ENCODE measurements at regions of chr6 and their contacts with region 1.

Region 1: DNA sequence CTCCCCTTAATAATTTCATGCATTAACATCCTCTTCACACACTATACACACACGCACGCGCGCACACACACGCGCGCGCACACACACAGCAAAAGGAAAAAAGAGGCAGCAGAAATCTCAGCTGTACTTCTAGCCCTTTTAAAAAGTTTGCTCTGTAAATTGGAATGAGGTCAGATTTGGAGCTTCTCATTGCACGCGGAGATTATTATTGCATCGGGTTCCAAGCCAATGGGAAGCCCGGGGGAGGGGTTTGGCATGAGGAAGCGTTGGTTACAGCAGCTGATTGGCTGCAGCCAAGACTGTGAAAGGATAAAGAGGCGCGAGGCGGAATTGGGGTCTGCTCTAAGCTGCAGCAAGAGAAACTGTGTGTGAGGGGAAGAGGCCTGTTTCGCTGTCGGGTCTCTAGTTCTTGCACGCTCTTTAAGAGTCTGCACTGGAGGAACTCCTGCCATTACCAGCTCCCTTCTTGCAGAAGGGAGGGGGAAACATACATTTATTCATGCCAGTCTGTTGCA is at the start of gene SOX4:
- DNase-seq: peak; percentile 95 to 97
- H3K4me3 ChIP-seq: peak within 1 kb of the TSS; percentile 99
- H3K4me3 Mint-ChIP-seq: peak within 1 kb of the TSS; percentile 20
- H3K27ac Mint-ChIP-seq: no peak within 1 kb of the TSS
- H3K4me1 ChIP-seq: peaks cover 9% of the 10 kb centered on the region
- H3K4me1 Mint-ChIP-seq: peaks cover 6% of the 10 kb centered on the region
- H3K27me3 ChIP-seq: no peaks in the 10 kb centered on the region
- H3K27me3 Mint-ChIP-seq: no peaks in the 10 kb centered on the region
- CTCF ChIP-seq: no peak
- total RNA-seq, gene SOX4: 76.8 and 77.3 TPM in 2 replicates

Region 2: GRCh38 chr6:20877008-20877937 is 716.2 kb before region 1 on chr6:
- CTCF ChIA-PET with region 1: interaction called, 7 read pairs
- POLR2A ChIA-PET with region 1: interaction called, 5 read pairs
- intact Hi-C with region 1: loop called (anchors 1 kb)
- DNase-seq: peak; percentile 82 to 89
- H3K4me3 ChIP-seq: no peak overlapping the region
- H3K4me3 Mint-ChIP-seq: peak overlapping the region; percentile 51
- H3K27ac Mint-ChIP-seq: peak overlapping the region; percentile 92
- H3K4me1 ChIP-seq: peaks cover 41% of the 10 kb centered on the region
- H3K4me1 Mint-ChIP-seq: peaks cover 33% of the 10 kb centered on the region
- H3K27me3 ChIP-seq: no peaks in the 10 kb centered on the region
- H3K27me3 Mint-ChIP-seq: no peaks in the 10 kb centered on the region
- CTCF ChIP-seq: no peak

Region 3: DNA sequence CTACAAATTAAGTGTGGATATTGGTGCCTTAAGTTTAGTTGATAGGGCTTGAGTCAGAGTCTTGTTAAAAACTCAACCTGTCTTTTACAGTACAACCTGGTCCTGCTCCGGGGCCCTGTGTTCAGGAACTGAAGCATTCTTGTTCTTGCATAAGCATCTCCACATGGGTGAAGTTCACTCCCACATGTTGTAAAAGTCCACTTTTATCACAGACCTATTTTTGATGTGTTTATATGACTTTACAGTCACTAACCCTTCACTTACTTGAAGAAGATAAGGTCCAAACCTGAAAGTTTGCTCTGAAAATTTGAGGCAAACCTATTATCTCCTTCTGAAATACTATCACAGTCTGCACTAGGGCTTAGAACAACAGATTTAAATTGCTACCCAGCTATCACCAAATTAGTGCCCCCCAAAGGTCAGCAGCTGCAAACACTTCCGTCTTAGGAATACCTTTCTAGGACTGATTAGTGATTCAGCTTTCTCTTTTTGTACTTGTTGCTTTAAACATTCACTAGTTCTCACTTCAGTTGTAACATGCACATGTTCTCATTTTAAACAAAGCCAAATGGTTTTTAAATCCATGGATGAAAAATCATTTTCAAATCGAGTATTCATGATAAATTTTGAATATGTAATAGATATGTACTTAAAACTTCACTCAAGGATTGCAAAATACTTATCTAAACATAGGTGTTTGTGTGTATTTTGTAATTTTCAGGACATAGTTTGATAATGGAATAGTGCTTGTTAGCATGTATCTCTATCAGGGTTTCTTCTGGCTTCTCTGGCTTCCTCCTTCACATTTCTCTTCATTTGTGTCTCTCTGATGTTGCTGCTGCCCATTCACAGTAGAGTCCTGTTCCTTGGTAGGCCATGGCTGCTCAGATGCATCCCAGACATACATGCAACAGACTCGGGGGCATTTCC is 469.7 kb before region 1 on chr6:
- CTCF ChIA-PET with region 1: no interaction called
- POLR2A ChIA-PET with region 1: no interaction called
- intact Hi-C with region 1: loop called (anchors 10 kb)
- DNase-seq: peak; percentile 27 to 44
- H3K4me3 ChIP-seq: no peak overlapping the region
- H3K4me3 Mint-ChIP-seq: no peak overlapping the region
- H3K27ac Mint-ChIP-seq: peak overlapping the region; percentile 65
- H3K4me1 ChIP-seq: peaks cover 15% of the 10 kb centered on the region
- H3K4me1 Mint-ChIP-seq: peaks cover 13% of the 10 kb centered on the region
- H3K27me3 ChIP-seq: no peaks in the 10 kb centered on the region
- H3K27me3 Mint-ChIP-seq: no peaks in the 10 kb centered on the region
- CTCF ChIP-seq: no peak

Region 4: DNA sequence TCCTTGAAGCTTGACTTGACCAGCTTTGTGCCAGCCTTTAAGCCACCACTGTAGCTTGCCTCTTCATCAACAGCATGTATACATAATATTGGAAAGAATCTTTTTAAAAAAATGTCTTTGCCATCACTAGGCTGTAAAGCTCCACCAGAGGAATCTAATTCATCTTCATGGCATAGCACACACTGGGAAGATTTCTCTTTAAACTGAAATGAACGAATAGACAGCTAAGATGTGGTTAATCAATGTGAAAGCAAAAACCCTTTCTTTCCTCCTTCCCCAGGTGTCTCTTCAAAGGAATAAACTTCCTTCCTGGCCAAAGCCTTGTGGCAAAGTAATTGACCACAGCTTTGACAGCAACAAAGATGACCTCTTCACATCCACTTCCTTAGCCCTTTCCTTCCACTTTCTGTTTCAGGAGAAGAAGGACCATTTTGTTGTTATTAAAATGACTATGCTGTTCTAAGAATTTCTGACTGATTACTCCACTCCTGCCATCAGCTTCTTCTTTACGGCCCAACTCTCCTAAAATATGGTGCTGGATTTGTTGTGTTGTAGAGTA is 428.6 kb before region 1 on chr6:
- CTCF ChIA-PET with region 1: no interaction called
- POLR2A ChIA-PET with region 1: no interaction called
- intact Hi-C with region 1: no loop called
- DNase-seq: no peak
- H3K4me3 ChIP-seq: no peak overlapping the region
- H3K4me3 Mint-ChIP-seq: no peak overlapping the region
- H3K27ac Mint-ChIP-seq: no peak overlapping the region
- H3K4me1 ChIP-seq: no peaks in the 10 kb centered on the region
- H3K4me1 Mint-ChIP-seq: peaks cover 6% of the 10 kb centered on the region
- H3K27me3 ChIP-seq: no peaks in the 10 kb centered on the region
- H3K27me3 Mint-ChIP-seq: no peaks in the 10 kb centered on the region
- CTCF ChIP-seq: no peak

Region 5: GRCh38 chr6:21451546-21452013 is 141.9 kb before region 1 on chr6:
- CTCF ChIA-PET with region 1: no interaction called
- POLR2A ChIA-PET with region 1: no interaction called
- intact Hi-C with region 1: no loop called
- DNase-seq: no peak
- H3K4me3 ChIP-seq: no peak overlapping the region
- H3K4me3 Mint-ChIP-seq: no peak overlapping the region
- H3K27ac Mint-ChIP-seq: no peak overlapping the region
- H3K4me1 ChIP-seq: peaks cover 17% of the 10 kb centered on the region
- H3K4me1 Mint-ChIP-seq: peaks cover 23% of the 10 kb centered on the region
- H3K27me3 ChIP-seq: no peaks in the 10 kb centered on the region
- H3K27me3 Mint-ChIP-seq: no peaks in the 10 kb centered on the region
- CTCF ChIP-seq: no peak

Region 6: DNA sequence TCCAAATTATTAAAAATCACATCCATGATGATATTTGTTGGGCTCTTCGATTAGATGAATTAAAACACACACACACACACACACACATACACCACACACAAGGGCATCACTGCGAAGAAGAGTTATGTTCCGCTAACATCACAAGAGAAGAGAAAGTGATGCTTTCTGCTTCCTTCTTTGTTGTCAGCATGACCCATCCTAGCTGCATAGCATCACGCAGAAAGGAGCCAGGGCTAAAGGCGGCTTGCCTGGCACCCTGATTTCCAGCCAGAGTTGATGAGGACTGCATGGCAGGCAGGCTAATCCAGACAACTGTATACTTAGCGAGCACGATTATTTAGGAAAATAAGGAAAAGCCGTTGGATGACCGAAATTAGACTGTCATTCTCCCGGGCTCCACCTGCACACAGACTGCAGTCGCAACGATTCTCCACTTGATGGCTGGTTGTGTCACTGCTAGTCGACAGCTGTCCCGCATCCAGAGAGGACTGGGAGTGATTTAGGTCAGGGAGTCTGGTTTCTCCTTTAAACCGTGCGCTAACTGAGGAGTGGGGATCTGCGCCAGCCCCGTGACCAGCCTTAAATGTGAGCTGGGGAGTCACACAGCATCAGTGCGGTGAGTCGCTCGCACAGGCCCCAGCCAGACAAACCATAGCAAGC is 70.5 kb before region 1 on chr6:
- CTCF ChIA-PET with region 1: interaction called, 8 read pairs
- POLR2A ChIA-PET with region 1: no interaction called
- intact Hi-C with region 1: loop called (anchors 1 kb)
- DNase-seq: peak; percentile 44 to 45
- H3K4me3 ChIP-seq: no peak overlapping the region
- H3K4me3 Mint-ChIP-seq: no peak overlapping the region
- H3K27ac Mint-ChIP-seq: no peak overlapping the region
- H3K4me1 ChIP-seq: no peaks in the 10 kb centered on the region
- H3K4me1 Mint-ChIP-seq: no peaks in the 10 kb centered on the region
- H3K27me3 ChIP-seq: no peaks in the 10 kb centered on the region
- H3K27me3 Mint-ChIP-seq: peaks cover 9% of the 10 kb centered on the region
- CTCF ChIP-seq: peak; percentile 31 to 56

Region 7: DNA sequence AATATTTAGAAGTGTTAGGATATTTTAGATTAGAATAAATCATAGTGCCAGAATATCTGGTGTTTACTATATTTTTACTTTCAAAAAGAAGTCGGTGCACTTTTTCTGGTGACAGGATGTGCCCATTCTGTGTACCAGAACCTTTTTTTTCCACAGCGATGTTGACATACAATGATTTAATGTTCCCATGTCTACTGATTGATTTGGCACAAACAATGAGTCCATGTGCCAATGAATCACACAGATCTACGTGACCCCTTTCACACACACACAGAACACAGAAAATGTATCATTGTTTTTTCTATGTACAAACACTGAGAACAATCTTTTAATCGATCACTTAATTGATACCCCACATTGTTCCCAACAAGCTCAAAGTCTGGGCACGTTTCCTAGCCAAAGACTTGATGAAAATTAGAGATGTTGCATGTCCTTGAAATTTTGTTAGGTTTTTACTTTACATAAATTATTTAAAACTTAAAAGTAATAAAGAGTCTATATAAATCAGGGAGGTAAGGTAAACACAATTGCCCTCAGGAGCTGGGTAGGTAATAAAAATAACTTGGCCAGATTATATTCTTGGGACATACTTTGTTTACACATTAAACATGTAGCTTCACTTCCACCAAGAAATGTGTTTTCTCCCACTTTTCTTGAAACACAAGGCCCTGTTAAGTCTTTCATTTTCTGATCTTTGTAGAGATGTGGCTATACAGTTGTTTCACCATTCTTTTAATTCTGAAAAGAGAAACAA is 36.3 kb before region 1 on chr6:
- CTCF ChIA-PET with region 1: no interaction called
- POLR2A ChIA-PET with region 1: no interaction called
- intact Hi-C with region 1: no loop called
- DNase-seq: no peak
- H3K4me3 ChIP-seq: no peak overlapping the region
- H3K4me3 Mint-ChIP-seq: no peak overlapping the region
- H3K27ac Mint-ChIP-seq: no peak overlapping the region
- H3K4me1 ChIP-seq: no peaks in the 10 kb centered on the region
- H3K4me1 Mint-ChIP-seq: no peaks in the 10 kb centered on the region
- H3K27me3 ChIP-seq: no peaks in the 10 kb centered on the region
- H3K27me3 Mint-ChIP-seq: no peaks in the 10 kb centered on the region
- CTCF ChIP-seq: no peak

Region 8: GRCh38 chr6:21679761-21680265 is 86.3 kb after region 1 on chr6:
- CTCF ChIA-PET with region 1: no interaction called
- POLR2A ChIA-PET with region 1: no interaction called
- intact Hi-C with region 1: no loop called
- DNase-seq: peak in 1 of 2 experiments; percentile 8
- H3K4me3 ChIP-seq: no peak overlapping the region
- H3K4me3 Mint-ChIP-seq: no peak overlapping the region
- H3K27ac Mint-ChIP-seq: peak overlapping the region; percentile 69
- H3K4me1 ChIP-seq: peaks cover 18% of the 10 kb centered on the region
- H3K4me1 Mint-ChIP-seq: peaks cover 6% of the 10 kb centered on the region
- H3K27me3 ChIP-seq: no peaks in the 10 kb centered on the region
- H3K27me3 Mint-ChIP-seq: no peaks in the 10 kb centered on the region
- CTCF ChIP-seq: no peak

Region 9: DNA sequence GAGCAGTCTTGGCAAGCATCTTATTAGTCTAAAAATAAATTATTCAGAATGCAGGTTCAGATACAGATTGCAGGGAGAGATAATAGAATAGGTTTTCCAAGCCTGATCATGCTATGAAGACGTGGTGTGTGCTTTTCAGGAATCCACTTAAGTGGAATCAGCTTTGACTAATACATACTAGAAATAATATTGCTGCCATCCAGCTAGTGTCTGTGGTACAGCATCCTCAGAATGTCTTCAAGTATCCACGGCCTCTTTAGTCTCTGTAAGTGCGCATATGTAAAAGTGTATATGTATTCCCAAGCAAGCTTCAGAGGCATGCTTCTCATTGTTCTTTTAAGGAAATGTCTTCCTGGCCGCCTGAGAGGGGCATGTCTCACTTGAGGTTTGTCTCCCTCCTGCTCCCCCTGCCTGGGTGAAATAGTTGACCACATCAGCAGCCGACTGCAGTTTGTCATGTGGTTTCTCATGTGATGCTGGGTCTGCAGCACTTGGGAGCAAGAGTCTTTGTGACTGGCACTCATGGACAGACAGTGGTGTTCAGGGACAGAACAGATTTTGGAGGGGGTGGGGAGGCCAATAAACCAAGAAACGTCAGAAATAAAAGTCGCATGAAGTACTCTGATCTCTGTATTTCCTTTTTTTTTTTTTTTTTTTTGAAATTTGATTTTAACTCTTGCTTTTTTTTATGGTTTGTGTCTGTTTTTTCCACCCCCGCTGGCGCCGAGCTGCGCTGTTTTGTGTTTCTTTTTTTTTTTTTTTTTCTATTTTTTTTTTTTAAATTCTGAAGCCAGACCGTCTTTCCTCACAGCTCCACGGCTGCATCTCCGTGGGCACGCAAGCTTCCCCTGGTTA is 552.6 kb after region 1 on chr6:
- CTCF ChIA-PET with region 1: no interaction called
- POLR2A ChIA-PET with region 1: no interaction called
- intact Hi-C with region 1: loop called (anchors 10 kb)
- DNase-seq: no peak
- H3K4me3 ChIP-seq: no peak overlapping the region
- H3K4me3 Mint-ChIP-seq: no peak overlapping the region
- H3K27ac Mint-ChIP-seq: no peak overlapping the region
- H3K4me1 ChIP-seq: peaks cover 15% of the 10 kb centered on the region
- H3K4me1 Mint-ChIP-seq: peaks cover 20% of the 10 kb centered on the region
- H3K27me3 ChIP-seq: no peaks in the 10 kb centered on the region
- H3K27me3 Mint-ChIP-seq: no peaks in the 10 kb centered on the region
- CTCF ChIP-seq: no peak

Region 10: GRCh38 chr6:22737331-22737730 is 1143.9 kb after region 1 on chr6:
- CTCF ChIA-PET with region 1: no interaction called
- POLR2A ChIA-PET with region 1: no interaction called
- intact Hi-C with region 1: loop called (anchors 1 kb)
- DNase-seq: peak; percentile 31 to 37
- H3K4me3 ChIP-seq: no peak overlapping the region
- H3K4me3 Mint-ChIP-seq: no peak overlapping the region
- H3K27ac Mint-ChIP-seq: no peak overlapping the region
- H3K4me1 ChIP-seq: no peaks in the 10 kb centered on the region
- H3K4me1 Mint-ChIP-seq: no peaks in the 10 kb centered on the region
- H3K27me3 ChIP-seq: no peaks in the 10 kb centered on the region
- H3K27me3 Mint-ChIP-seq: no peaks in the 10 kb centered on the region
- CTCF ChIP-seq: peak; percentile 24 to 45